ENCODE measurements at regions of chr2 and their contacts with region 1.

Region 1: GRCh38 chr2:154637456-154637855 is 61.0 kb upstream of the KCNJ3 start:
- DNase-seq: no peak
- ATAC-seq: no peak
- H3K4me3 ChIP-seq: no peak overlapping the region
- H3K27ac ChIP-seq: no peak overlapping the region
- H3K4me1 ChIP-seq: no peaks in the 10 kb centered on the region
- H3K27me3 ChIP-seq: no peaks in the 10 kb centered on the region
- CTCF ChIP-seq: no peak
- EP300 ChIP-seq: no peak
- POLR2A ChIP-seq: no peak
- RAD21 ChIP-seq: no peak

Region 2: GRCh38 chr2:154600927-154601494 is 36.4 kb before region 1 on chr2:
- CTCF ChIA-PET with region 1: no interaction called
- POLR2A ChIA-PET with region 1: no interaction called
- RAD21 ChIA-PET with region 1: no interaction called
- SMC1A ChIA-PET with region 1: interaction called, 3 read pairs
- in situ Hi-C with region 1: no loop called
- intact Hi-C with region 1: loop called (anchors 1 kb)
- DNase-seq: no peak
- ATAC-seq: no peak
- H3K4me3 ChIP-seq: no peak overlapping the region
- H3K27ac ChIP-seq: no peak overlapping the region
- H3K4me1 ChIP-seq: no peaks in the 10 kb centered on the region
- H3K27me3 ChIP-seq: no peaks in the 10 kb centered on the region
- CTCF ChIP-seq: no peak
- EP300 ChIP-seq: no peak
- POLR2A ChIP-seq: no peak
- RAD21 ChIP-seq: no peak

Region 3: DNA sequence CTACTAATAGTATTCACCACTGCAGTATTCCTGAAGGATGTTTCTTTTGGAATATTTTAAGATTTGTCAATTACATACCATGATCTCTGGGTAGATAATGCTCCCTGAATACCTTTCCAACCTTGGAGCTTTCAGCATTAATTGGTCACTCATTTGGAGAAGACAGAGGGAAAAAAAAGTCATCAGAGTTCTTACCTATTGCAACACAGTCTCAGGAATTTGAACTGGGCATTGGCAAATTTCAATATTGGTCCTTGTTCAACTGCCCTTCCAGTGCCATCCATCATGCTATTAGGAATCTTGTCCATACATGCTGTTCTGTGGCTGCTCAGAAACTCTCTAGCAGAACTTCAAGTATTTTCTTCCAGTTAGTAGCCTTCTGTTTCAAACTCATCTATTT is 22.6 kb before region 1 on chr2:
- CTCF ChIA-PET with region 1: no interaction called
- POLR2A ChIA-PET with region 1: no interaction called
- RAD21 ChIA-PET with region 1: no interaction called
- SMC1A ChIA-PET with region 1: no interaction called
- in situ Hi-C with region 1: no loop called
- intact Hi-C with region 1: no loop called
- DNase-seq: no peak
- ATAC-seq: no peak
- H3K4me3 ChIP-seq: no peak overlapping the region
- H3K27ac ChIP-seq: no peak overlapping the region
- H3K4me1 ChIP-seq: no peaks in the 10 kb centered on the region
- H3K27me3 ChIP-seq: no peaks in the 10 kb centered on the region
- CTCF ChIP-seq: no peak
- EP300 ChIP-seq: no peak
- POLR2A ChIP-seq: no peak
- RAD21 ChIP-seq: no peak

Region 4: GRCh38 chr2:154658854-154659253 is 21.4 kb after region 1 on chr2:
- CTCF ChIA-PET with region 1: no interaction called
- POLR2A ChIA-PET with region 1: no interaction called
- RAD21 ChIA-PET with region 1: no interaction called
- SMC1A ChIA-PET with region 1: no interaction called
- in situ Hi-C with region 1: no loop called
- intact Hi-C with region 1: loop called (anchors 1 kb)
- DNase-seq: no peak
- ATAC-seq: no peak
- H3K4me3 ChIP-seq: no peak overlapping the region
- H3K27ac ChIP-seq: no peak overlapping the region
- H3K4me1 ChIP-seq: no peaks in the 10 kb centered on the region
- H3K27me3 ChIP-seq: no peaks in the 10 kb centered on the region
- CTCF ChIP-seq: no peak
- EP300 ChIP-seq: no peak
- POLR2A ChIP-seq: no peak
- RAD21 ChIP-seq: no peak